Dendritic cell treated with granulocyte-macrophage colony-stimulating factor and Interleukin-4, amounts not matched to agents 40 ng/mL and 50 ng/mL, for 4 days (primary cell): ENCODE measurements at regions of chr5 and their contacts with region 1.

Region 1: GRCh38 chr5:122790354-122791103 is 15.6 kb downstream of the SNX2 start:
- H3K4me3 Mint-ChIP-seq: no peak overlapping the region
- H3K27ac Mint-ChIP-seq: peak overlapping the region; percentile 68
- H3K4me1 Mint-ChIP-seq: peaks cover 49% of the 10 kb centered on the region
- H3K27me3 Mint-ChIP-seq: no peaks in the 10 kb centered on the region

Region 2: GRCh38 chr5:121273833-121274433 is 1516.6 kb before region 1 on chr5:
- intact Hi-C with region 1: no loop called
- H3K4me3 Mint-ChIP-seq: no peak overlapping the region
- H3K27ac Mint-ChIP-seq: no peak overlapping the region
- H3K4me1 Mint-ChIP-seq: no peaks in the 10 kb centered on the region
- H3K27me3 Mint-ChIP-seq: no peaks in the 10 kb centered on the region

Region 3: GRCh38 chr5:122523776-122524175 is 266.8 kb before region 1 on chr5:
- intact Hi-C with region 1: loop called (anchors 10 kb)
- H3K4me3 Mint-ChIP-seq: no peak overlapping the region
- H3K27ac Mint-ChIP-seq: no peak overlapping the region
- H3K4me1 Mint-ChIP-seq: no peaks in the 10 kb centered on the region
- H3K27me3 Mint-ChIP-seq: no peaks in the 10 kb centered on the region

Region 4: DNA sequence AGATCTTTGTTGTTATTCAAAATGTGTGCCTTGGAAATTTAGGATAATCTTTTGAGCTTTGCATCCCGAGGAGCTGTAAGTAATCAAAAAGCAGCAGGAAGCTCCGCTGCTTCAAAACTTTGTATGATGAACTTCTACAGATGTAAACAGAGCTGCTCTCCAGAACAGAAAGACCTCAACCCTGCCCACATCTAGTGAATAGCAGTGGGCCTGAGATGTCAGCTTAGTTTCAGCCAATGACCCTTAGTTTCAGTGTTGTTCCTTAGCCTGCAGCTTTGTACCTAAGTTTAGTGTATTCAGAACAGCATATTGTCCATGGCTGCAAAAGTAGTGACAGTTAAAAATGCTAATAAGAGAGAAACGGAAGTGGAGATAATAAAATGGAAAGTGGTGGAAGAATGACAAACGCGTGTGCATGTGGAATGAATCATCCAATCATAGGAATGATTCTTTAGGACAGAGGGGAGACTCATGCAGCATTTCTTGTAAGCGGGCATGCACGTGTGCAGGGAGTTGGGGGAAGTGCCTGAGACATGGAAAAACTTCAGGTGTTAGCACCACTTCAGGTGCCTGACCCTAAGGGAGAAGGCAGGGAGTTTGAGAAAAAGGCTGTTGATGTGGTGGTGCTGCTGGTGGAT is 79.8 kb after region 1 on chr5:
- intact Hi-C with region 1: no loop called
- H3K4me3 Mint-ChIP-seq: no peak overlapping the region
- H3K27ac Mint-ChIP-seq: no peak overlapping the region
- H3K4me1 Mint-ChIP-seq: peaks cover 13% of the 10 kb centered on the region
- H3K27me3 Mint-ChIP-seq: no peaks in the 10 kb centered on the region